Activated CD4-positive, alpha-beta memory T cell treated with anti-CD3 and anti-CD28 coated beads for 36 hours (primary cell): ENCODE measurements at regions of chr2 and their contacts with region 1.

Region 1: DNA sequence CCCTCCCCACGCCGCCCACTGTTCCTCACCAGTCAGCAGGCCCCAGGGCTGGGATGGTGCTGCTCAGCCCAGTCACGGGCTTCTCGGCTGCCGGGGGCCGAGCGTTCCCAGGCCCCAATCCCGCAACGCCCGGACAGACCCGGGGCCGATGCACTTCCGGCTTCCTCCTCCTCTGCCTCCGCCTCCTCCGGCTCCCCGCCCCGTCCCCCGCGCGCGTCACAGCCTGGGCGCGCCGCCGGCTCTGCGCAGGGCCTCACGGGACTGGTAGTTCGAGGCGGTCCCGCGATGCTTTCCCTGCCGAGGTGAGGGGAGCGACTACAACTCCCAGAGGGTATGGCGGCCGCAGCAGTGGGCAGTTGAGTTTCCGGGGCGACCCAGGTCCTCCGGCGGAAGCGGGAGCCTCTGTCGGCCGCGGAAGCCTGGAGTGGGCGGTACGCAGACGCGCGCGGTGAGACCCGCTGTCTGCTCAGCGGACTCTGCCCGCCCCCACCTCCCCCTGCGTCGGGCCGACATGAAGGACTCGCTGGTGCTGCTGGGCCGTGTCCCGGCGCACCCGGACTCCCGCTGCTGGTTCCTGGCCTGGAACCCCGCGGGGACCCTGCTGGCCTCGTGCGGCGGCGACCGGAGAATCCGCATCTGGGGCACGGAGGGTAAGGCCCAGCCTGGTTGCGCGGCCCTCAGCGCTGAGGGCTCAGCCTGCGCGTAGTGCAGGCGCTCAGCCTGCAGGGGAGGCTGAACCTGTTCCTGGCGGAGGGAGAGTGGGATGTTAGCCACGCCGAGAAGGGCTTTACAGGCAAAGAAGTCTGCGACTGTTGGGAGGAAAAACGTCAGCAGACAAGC is at the starts of genes CIAO1 and TMEM127:
- DNase-seq: peak; percentile 99
- H3K4me3 Mint-ChIP-seq: peak within 1 kb of the TSS; percentile 99
- H3K27ac Mint-ChIP-seq: peak within 1 kb of the TSS; percentile 97
- H3K4me1 Mint-ChIP-seq: peaks cover 50% of the 10 kb centered on the region
- H3K27me3 Mint-ChIP-seq: no peaks in the 10 kb centered on the region
- total RNA-seq, gene CIAO1: 86.6 to 87.1 TPM
- total RNA-seq, gene TMEM127: 19.3 to 22.2 TPM

Region 2: GRCh38 chr2:96145036-96145847 is 120.8 kb before region 1 on chr2 and contains the start of gene DUSP2:
- CTCF ChIA-PET with region 1: interaction called, 7 read pairs
- POLR2A ChIA-PET with region 1: interaction called, 6 read pairs
- intact Hi-C with region 1: loop called (anchors 1 kb)
- DNase-seq: peak; percentile 96
- H3K4me3 Mint-ChIP-seq: peak within 1 kb of the TSS; percentile 96
- H3K27ac Mint-ChIP-seq: peak within 1 kb of the TSS; percentile 100
- H3K4me1 Mint-ChIP-seq: peaks cover 57% of the 10 kb centered on the region
- H3K27me3 Mint-ChIP-seq: peaks cover 4% of the 10 kb centered on the region
- total RNA-seq, gene DUSP2: 522 to 539 TPM

Region 3: DNA sequence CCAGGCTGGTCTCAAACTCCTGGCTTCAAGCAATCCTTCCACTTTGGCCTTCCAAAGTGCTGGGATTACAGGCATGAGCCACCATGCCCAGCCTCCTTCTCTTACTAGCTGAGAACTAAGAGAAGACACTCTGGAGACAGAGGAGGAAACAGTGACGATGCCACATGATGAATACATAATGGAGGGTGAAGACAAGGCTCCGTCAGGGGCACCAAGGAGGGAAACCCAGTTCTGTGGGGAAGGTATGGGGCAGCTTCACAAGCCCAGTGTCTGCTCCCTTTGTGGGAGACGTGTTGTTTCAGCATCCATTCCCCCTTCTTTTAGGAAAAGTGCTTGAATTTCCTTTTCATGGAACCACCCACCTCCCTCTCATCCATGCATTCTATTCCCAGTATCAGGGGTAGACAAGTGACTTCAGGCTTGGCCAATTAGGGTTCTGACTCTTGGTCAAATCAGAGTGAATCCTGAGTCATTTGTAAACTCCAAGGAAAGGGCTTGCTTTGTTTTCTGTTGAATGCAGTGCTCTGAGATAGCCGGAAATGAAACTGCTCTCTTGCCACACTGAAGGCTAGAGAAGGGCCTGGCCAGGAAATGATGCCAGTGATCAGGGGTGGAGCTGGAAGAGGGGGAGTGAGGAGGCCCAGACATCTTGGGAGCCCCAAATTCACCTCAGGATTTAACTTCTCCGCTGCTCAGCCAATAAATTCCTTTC is 24.0 kb before region 1 on chr2:
- CTCF ChIA-PET with region 1: interaction called, 3 read pairs
- POLR2A ChIA-PET with region 1: no interaction called
- intact Hi-C with region 1: loop called (anchors 1 kb)
- DNase-seq: peak; percentile 86
- H3K4me3 Mint-ChIP-seq: peak overlapping the region; percentile 28
- H3K27ac Mint-ChIP-seq: peak overlapping the region; percentile 94
- H3K4me1 Mint-ChIP-seq: peaks cover 47% of the 10 kb centered on the region
- H3K27me3 Mint-ChIP-seq: no peaks in the 10 kb centered on the region

Region 4: GRCh38 chr2:96336104-96336775 is 70.2 kb after region 1 on chr2:
- CTCF ChIA-PET with region 1: no interaction called
- POLR2A ChIA-PET with region 1: interaction called, 4 read pairs
- intact Hi-C with region 1: loop called (anchors 2 kb)
- DNase-seq: no peak
- H3K4me3 Mint-ChIP-seq: peak overlapping the region; percentile 94
- H3K27ac Mint-ChIP-seq: peak overlapping the region; percentile 84
- H3K4me1 Mint-ChIP-seq: peaks cover 51% of the 10 kb centered on the region
- H3K27me3 Mint-ChIP-seq: no peaks in the 10 kb centered on the region

Region 5: DNA sequence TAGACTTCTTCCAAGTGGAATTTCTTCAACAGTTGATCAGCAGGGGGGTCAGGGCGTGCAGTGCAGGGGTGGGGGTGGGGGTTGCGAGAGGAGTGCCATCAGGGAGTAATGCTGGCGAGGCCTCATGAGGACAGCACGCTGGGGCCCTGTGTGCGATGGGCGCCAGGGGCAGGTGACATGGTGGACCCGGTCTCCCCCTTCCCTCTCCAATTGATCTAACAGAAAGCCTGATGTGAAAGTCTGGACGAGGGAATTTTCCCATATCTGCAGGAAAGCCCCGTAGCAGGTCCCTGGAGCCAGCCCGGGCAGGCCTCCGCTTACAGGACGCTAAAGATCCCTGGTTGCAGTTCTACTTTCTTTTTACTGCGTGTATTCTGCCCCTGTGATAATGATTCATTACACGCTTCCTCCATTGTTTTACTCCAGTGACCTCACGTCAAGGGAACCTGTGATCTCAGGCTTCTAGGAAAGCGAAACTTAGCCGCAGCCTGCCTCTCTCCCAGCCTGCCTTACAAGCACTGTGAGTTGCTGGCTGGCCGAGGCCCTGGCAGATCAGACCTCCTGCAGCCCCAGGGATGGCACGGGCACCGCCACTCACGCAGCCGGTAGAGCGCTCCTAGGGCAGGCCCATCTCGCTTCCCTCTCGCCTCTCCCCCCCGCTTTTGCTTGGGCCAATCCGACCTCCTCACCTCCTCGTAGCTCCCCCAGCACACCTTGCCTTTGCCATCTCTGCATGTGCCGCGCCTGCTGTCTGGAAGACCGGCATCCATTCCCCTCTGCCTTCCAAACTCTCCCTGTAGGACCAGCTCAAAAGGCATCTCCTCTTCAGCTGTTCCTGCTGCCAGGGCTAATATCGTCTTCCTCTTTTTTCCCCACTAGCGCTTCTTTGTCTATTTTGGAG is 219.9 kb after region 1 on chr2:
- CTCF ChIA-PET with region 1: no interaction called
- POLR2A ChIA-PET with region 1: no interaction called
- intact Hi-C with region 1: loop called (anchors 2 kb)
- DNase-seq: peak; percentile 93
- H3K4me3 Mint-ChIP-seq: peak overlapping the region; percentile 95
- H3K27ac Mint-ChIP-seq: peak overlapping the region; percentile 99
- H3K4me1 Mint-ChIP-seq: peaks cover 47% of the 10 kb centered on the region
- H3K27me3 Mint-ChIP-seq: no peaks in the 10 kb centered on the region

Region 6: GRCh38 chr2:96631804-96632435 is 365.9 kb after region 1 on chr2:
- CTCF ChIA-PET with region 1: no interaction called
- POLR2A ChIA-PET with region 1: no interaction called
- intact Hi-C with region 1: no loop called
- DNase-seq: no peak
- H3K4me3 Mint-ChIP-seq: no peak overlapping the region
- H3K27ac Mint-ChIP-seq: no peak overlapping the region
- H3K4me1 Mint-ChIP-seq: peaks cover 35% of the 10 kb centered on the region
- H3K27me3 Mint-ChIP-seq: no peaks in the 10 kb centered on the region